ENCODE measurements at regions of chr13 and their contacts with region 1.

Region 1: GRCh38 chr13:27826379-27827353 is 34.4 kb downstream of the GSX1 start:
- DNase-seq: peak; percentile 66 to 86
- ATAC-seq: peak; percentile 95
- H3K4me3 ChIP-seq: peak overlapping the region; percentile 34
- H3K27ac ChIP-seq: peak overlapping the region; percentile 36 to 68; a peak in 2 of 6 replicates
- H3K4me1 ChIP-seq: no peaks in the 10 kb centered on the region
- CTCF ChIP-seq: peak; percentile 79
- EP300 ChIP-seq: no peak
- POLR2A ChIP-seq: no peak
- RAD21 ChIP-seq: peak; percentile 79 to 85

Region 2: DNA sequence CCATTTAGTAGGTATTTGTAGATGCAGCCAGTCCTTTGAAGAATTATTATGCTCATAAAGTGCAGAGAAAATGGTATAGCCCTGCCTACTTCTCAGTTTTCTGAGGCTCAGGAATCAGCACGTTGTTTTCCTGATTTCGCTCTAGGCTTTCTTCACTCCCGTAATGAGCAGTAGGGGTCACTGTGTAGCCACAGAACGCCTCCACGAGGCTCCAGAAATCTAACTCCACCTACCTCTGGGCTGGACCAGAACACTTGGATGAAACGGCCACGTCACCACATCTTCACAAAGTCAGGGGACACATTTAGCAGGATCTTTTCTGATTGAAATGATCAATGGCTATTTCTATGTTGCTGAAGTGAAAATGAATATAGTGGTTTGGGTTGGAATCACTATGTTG is 452.0 kb before region 1 on chr13:
- CTCF ChIA-PET with region 1: interaction called, 88 read pairs
- POLR2A ChIA-PET with region 1: no interaction called
- DNase-seq: peak; percentile 76 to 81
- ATAC-seq: peak; percentile 91 to 94
- H3K4me3 ChIP-seq: no peak overlapping the region
- H3K27ac ChIP-seq: no peak overlapping the region
- H3K4me1 ChIP-seq: 0 out of 3 replicates have a peak, but pooled peaks cover 4% of the 10 kb centered on the region
- CTCF ChIP-seq: peak; percentile 67
- EP300 ChIP-seq: no peak
- POLR2A ChIP-seq: no peak
- RAD21 ChIP-seq: peak; percentile 68 to 77

Region 3: DNA sequence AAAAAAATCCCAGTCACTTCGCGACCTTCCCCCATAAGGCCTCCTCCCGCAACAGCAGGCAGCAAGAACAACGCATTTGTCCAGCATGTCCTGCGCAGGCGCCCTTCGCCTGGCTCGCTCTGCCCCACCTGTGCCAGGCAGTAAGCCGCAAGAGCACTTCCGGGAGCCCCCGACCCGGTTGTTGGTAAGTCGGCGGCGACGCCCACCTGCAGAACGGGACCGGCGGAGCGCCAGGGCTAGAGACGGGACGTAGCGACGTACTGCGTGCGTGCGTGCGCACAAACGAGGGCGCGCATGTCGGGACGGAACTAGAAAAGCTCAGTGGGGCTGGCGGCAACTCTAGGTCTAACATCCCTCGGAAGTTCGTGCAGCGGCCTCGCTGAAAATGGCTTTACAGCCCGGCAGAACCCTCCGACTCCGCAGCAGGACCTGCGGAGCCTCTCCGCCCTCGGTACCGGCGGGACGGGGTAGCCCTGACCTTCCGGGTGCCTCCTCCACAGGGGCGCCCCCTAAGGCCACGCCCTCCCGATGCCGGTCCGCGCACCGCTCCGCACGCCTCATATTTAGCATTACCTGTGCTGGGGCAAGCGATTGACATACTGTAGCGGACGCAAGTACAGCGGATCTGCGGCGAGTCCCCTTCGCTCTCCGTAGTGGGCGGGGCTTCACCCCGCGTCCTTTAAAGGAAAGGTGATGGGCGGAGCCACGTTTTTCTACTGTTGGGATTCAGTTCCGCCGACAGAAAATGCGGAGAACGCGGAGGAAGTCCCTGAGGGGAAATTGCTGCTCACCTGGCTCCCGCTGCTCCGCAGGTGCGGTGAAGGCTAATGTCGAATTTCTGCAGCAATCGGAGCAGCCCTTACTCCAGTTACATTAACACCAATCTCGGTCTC is 376.5 kb before region 1 on chr13 and contains the start of gene MTIF3:
- CTCF ChIA-PET with region 1: interaction called, 14 read pairs
- POLR2A ChIA-PET with region 1: interaction called, 6 read pairs
- DNase-seq: peak; percentile 71 to 94
- ATAC-seq: peak; percentile 95 to 97
- H3K4me3 ChIP-seq: peak within 1 kb of the TSS; percentile 68
- H3K27ac ChIP-seq: peak within 1 kb of the TSS; percentile 94 to 97
- H3K4me1 ChIP-seq: peaks cover 11% of the 10 kb centered on the region; the same call in 2 of the 3 replicates
- CTCF ChIP-seq: no peak
- EP300 ChIP-seq: no peak
- POLR2A ChIP-seq: peak; percentile 71
- RAD21 ChIP-seq: no peak
- polyA plus RNA-seq, gene MTIF3: 50.3 and 61.8 TPM in 2 replicates

Region 4: DNA sequence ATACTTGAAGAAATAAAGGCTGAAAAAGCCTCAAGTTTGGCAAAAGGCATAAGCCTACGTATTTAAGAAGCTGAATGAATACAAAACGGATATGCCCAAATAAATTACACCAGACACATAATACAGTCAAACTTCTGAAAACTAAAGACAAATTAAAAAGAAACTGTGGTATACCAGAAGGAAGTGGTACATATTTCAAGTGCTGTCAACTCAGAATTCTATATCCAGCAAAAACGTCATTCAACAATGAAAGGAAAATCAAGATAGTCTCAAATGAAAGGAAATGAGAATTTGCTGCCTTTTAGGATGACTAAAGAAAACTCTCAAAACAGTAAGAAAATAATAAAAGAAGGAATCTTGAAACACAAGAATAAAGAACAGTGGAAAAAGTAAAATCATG is 135.5 kb before region 1 on chr13:
- CTCF ChIA-PET with region 1: no interaction called
- POLR2A ChIA-PET with region 1: no interaction called
- DNase-seq: no peak
- ATAC-seq: no peak
- H3K4me3 ChIP-seq: no peak overlapping the region
- H3K27ac ChIP-seq: no peak overlapping the region
- H3K4me1 ChIP-seq: no peaks in the 10 kb centered on the region
- CTCF ChIP-seq: no peak
- EP300 ChIP-seq: no peak
- POLR2A ChIP-seq: no peak
- RAD21 ChIP-seq: no peak

Region 5: GRCh38 chr13:27770809-27771208 is 55.9 kb before region 1 on chr13:
- CTCF ChIA-PET with region 1: interaction called, 23 read pairs
- POLR2A ChIA-PET with region 1: no interaction called
- DNase-seq: peak; percentile 15 to 46
- ATAC-seq: peak; percentile 71 to 83; a peak in 5 of 6 replicates
- H3K4me3 ChIP-seq: no peak overlapping the region
- H3K27ac ChIP-seq: no peak overlapping the region
- H3K4me1 ChIP-seq: no peaks in the 10 kb centered on the region
- CTCF ChIP-seq: peak; percentile 28; the same call in 2 of the 3 replicates
- EP300 ChIP-seq: no peak
- POLR2A ChIP-seq: no peak
- RAD21 ChIP-seq: peak; percentile 23 to 46; a peak in 2 of 5 replicates

Region 6: GRCh38 chr13:27868641-27869435 is 42.2 kb after region 1 on chr13:
- CTCF ChIA-PET with region 1: interaction called, 11 read pairs
- POLR2A ChIA-PET with region 1: no interaction called
- DNase-seq: peak in 1 of 2 experiments; percentile 7
- ATAC-seq: no peak
- H3K4me3 ChIP-seq: no peak overlapping the region
- H3K27ac ChIP-seq: no peak overlapping the region
- H3K4me1 ChIP-seq: no peaks in the 10 kb centered on the region
- CTCF ChIP-seq: peak; percentile 45
- EP300 ChIP-seq: no peak
- POLR2A ChIP-seq: no peak
- RAD21 ChIP-seq: peak; percentile 26 to 28; a peak in 2 of 5 replicates

Region 7: GRCh38 chr13:27977476-27978300 is 151.0 kb after region 1 on chr13:
- CTCF ChIA-PET with region 1: interaction called, 120 read pairs
- POLR2A ChIA-PET with region 1: no interaction called
- DNase-seq: peak in 1 of 2 experiments; percentile 29
- ATAC-seq: peak; percentile 27 to 68; a peak in 3 of 6 replicates
- H3K4me3 ChIP-seq: peak overlapping the region; percentile 31; the same call in 2 of the 3 replicates
- H3K27ac ChIP-seq: no peak overlapping the region
- H3K4me1 ChIP-seq: no peaks in the 10 kb centered on the region; the same call in 2 of the 3 replicates
- CTCF ChIP-seq: no peak
- EP300 ChIP-seq: no peak
- POLR2A ChIP-seq: no peak
- RAD21 ChIP-seq: no peak

Measured in A549 (cell line).